ENCODE measurements at regions of chrX and their contacts with region 1.

Region 1: DNA sequence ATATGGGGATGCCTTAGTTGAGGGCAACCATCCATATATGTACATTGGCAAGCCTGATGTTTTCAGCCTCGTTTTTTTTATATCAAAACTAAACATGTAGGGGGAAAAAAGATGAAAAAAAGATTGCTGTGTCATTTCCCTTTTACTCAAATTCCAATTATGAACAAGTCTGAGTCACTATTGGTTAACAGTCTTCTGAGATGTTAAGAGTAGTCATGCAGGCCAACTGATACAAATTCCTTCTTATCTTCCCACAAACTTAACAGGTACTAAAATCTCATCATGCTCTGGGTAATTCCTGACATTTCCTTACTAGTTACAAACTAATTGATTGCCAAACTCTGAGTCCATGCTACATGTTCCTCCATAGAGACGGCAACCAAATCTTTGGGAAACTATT is 222.1 kb downstream of the FRMPD4 start:
- DNase-seq: peak; percentile 1
- H3K4me3 ChIP-seq: no peak overlapping the region
- H3K27ac ChIP-seq: no peak overlapping the region
- H3K4me1 ChIP-seq: no peaks in the 10 kb centered on the region
- H3K27me3 ChIP-seq: no peaks in the 10 kb centered on the region
- CTCF ChIP-seq: no peak

Region 2: GRCh38 chrX:12582649-12583048 is 222.3 kb after region 1 on chrX:
- CTCF ChIA-PET with region 1: no interaction called
- POLR2A ChIA-PET with region 1: no interaction called
- intact Hi-C with region 1: no loop called
- DNase-seq: no peak
- H3K4me3 ChIP-seq: no peak overlapping the region
- H3K27ac ChIP-seq: no peak overlapping the region
- H3K4me1 ChIP-seq: no peaks in the 10 kb centered on the region
- H3K27me3 ChIP-seq: no peaks in the 10 kb centered on the region
- CTCF ChIP-seq: no peak

Region 3: DNA sequence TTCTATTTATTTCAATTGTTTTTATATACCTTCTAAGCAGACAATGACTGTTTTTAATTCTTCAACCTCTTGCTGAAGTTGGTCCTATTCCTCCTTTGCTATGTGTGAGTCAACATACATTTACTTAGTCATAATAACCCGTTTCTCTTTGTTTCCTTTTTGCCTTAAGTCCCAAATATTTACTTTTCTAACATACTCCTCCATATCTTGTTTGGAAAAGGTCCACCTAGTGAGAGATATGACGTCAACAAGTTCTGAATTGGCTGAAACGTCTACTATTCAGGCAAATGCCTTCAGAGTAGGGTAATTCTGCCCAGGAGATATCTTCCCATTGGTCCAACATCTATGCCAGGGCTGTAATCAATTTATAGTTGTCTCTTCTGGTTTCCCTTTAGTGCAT is 1848.7 kb after region 1 on chrX:
- CTCF ChIA-PET with region 1: interaction called, 11 read pairs
- POLR2A ChIA-PET with region 1: no interaction called
- intact Hi-C with region 1: no loop called
- DNase-seq: no peak
- H3K4me3 ChIP-seq: no peak overlapping the region
- H3K27ac ChIP-seq: no peak overlapping the region
- H3K4me1 ChIP-seq: no peaks in the 10 kb centered on the region
- H3K27me3 ChIP-seq: no peaks in the 10 kb centered on the region
- CTCF ChIP-seq: no peak